Left ventricle myocardium inferior (tissue), 1 donor: ENCODE measurements at regions of chr19 and their contacts with region 1.

Region 1: DNA sequence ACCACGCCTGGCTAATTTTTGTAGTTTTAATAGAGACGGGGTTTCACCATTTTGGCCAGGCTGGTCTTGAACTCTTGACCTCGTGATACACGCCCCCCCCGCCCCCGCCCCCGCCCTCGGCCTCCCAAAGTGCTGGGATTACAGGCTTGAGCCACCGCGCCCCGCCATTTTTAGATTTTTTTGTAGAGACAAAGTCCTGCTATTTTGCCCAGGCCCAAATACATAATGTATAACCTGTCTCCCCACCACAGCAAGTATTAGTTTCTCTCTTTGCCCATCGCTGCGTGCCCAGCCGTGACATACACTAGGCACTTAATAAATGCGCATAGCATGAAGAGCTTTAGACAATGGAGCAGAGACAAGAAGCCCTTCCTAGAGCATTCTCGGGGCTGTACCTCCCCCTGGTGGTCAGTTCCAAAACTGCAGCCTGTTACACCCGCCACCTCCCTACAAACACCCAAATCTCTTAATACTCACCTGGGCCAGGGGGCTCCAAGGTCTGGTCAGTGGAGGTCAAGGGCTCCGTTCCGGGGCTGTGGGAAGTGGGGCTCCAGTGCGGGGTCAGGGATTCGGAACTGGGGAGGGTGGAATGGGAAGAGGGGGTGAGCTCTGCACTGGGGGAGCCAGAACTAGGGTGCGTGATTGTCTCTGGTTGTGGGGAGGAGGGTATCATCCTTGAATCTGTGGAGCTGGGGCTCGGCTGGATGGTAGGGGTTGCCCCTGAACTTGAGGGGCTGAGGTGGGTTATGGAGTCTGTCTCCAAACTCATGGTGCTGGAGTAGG is 22.5 kb downstream of the IQCN start:
- DNase-seq: peak; percentile 69
- H3K4me3 ChIP-seq: no peak overlapping the region
- H3K27ac ChIP-seq: no peak overlapping the region
- H3K4me1 ChIP-seq: no peaks in the 10 kb centered on the region
- H3K27me3 ChIP-seq: peaks cover 30% of the 10 kb centered on the region
- CTCF ChIP-seq: peak; percentile 93

Region 2: DNA sequence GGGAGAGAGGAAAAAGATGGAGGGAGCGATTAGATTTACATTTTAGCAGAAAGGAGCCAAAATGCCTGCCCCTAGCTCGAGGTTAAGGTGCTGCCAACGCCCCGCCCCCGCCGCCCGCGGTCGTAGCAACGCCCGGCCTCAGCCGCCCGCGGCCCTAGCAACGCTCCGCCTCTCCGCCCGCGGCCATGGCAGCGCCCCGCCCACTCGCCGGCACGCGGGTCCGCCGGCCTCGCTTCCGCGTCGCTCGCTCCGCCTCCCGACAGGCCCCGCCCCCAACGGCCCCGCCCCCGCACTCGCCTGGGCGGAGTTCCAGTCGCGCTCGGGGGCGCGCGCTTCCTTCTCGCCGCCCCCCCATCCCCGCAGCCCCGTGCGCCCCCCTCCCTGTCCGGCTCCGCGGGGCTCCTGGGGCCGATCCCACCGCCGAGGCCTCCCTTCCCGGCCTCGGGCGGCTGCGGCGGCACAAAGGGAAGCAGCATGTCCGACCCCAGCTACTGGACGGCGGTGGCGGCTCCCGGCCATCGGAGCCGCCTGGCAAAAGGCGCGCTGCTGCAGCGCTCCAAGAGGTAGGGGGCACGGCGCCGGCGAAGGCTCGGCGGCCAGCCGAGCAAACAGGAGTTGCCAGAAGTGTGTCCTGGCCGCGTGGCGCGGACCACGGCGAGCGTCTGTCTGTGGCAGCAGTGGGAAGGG is 133.9 kb before region 1 on chr19:
- intact Hi-C with region 1: loop called (anchors 10 kb)
- DNase-seq: peak; percentile 90
- H3K4me3 ChIP-seq: peak overlapping the region; percentile 87
- H3K27ac ChIP-seq: peak overlapping the region; percentile 77
- H3K4me1 ChIP-seq: peaks cover 27% of the 10 kb centered on the region
- H3K27me3 ChIP-seq: no peaks in the 10 kb centered on the region
- CTCF ChIP-seq: no peak

Region 3: GRCh38 chr19:18205200-18205892 is 46.4 kb before region 1 on chr19:
- intact Hi-C with region 1: loop called (anchors 5 kb)
- DNase-seq: peak; percentile 86
- H3K4me3 ChIP-seq: peak overlapping the region; percentile 82
- H3K27ac ChIP-seq: peak overlapping the region; percentile 100
- H3K4me1 ChIP-seq: peaks cover 39% of the 10 kb centered on the region
- H3K27me3 ChIP-seq: peaks cover 9% of the 10 kb centered on the region
- CTCF ChIP-seq: no peak